Activated CD8-positive, alpha-beta T cell treated with anti-CD3 and anti-CD28 coated beads, Interleukin-2, amount 10 ng/mL, durations not matched to agents 7 days and 5 days (primary cell): ENCODE measurements at regions of chr9 and their contacts with region 1.

Region 1: DNA sequence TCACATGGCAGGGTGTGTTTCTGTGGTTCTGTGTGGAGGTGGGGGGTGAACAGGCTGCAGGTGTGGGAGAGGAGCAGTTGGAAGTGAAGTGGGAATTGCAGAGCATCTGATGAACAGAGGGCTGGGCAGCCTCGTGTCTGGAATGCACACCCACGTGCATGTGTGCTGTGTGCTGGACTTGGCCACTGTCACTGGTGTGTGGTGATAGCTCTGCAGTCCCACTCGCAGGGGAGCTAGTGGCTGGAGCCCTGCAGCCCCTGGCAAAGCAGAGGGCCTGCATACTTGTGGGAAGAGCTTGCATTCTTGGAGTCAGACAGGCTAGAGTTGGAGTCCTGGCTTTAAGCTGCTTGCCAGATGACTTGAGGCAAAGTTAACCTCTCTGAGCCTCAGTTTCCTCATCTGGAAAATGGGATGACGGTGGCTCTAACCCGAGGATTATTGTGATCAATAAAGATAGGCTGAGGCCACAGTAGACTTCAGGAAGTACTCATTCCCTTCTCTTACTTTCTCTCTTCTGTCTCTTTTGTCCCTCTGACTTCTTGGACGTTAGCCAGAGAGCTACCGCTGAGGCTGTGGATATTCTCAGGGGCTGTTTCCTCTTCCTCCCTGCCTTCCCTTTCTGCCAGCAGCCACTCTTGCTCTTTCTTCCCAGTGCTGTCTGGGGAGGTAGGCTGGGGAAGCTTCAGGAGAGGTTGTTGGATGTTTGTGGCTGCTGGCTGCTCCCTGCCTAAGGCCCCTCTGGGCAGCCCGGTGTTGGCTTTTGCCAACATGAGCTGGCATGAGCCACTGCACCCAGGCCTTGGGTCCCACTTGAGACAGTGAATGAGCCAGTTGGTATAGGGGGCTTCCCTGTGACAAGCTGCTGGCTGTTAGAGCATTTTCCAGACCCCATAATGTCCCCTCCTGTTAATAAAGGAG is 18.3 kb downstream of the PSAT1 start:
- DNase-seq: no peak
- ATAC-seq: no peak
- H3K4me3 Mint-ChIP-seq: no peak overlapping the region
- H3K27ac Mint-ChIP-seq: peak overlapping the region; percentile 72
- H3K4me1 Mint-ChIP-seq: no peaks in the 10 kb centered on the region
- H3K27me3 Mint-ChIP-seq: no peaks in the 10 kb centered on the region

Region 2: GRCh38 chr9:78167356-78167755 is 147.9 kb before region 1 on chr9:
- CTCF ChIA-PET with region 1: no interaction called
- POLR2A ChIA-PET with region 1: no interaction called
- DNase-seq: no peak
- ATAC-seq: no peak
- H3K4me3 Mint-ChIP-seq: no peak overlapping the region
- H3K27ac Mint-ChIP-seq: no peak overlapping the region
- H3K4me1 Mint-ChIP-seq: no peaks in the 10 kb centered on the region
- H3K27me3 Mint-ChIP-seq: peaks cover 2% of the 10 kb centered on the region

Region 3: DNA sequence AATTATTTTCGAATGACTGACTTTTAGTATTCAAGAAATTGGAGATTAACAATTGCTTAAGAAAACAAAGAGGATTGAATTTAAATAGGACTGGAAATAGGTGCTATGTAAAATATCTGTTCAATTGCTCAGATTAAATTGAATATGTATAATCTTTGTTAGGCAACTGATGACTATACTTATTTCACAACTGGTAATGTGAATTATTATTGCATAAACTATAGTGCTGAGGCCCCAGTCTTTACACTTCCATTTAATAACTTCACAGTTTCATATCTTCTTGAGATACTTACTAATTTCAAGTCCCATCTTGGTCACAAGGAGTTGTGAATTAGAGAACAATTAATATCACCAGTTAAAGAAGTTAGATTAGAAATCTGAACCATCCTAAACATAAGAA is 62.6 kb before region 1 on chr9:
- CTCF ChIA-PET with region 1: no interaction called
- POLR2A ChIA-PET with region 1: no interaction called
- DNase-seq: no peak
- ATAC-seq: no peak
- H3K4me3 Mint-ChIP-seq: no peak overlapping the region
- H3K27ac Mint-ChIP-seq: no peak overlapping the region
- H3K4me1 Mint-ChIP-seq: peaks cover 12% of the 10 kb centered on the region
- H3K27me3 Mint-ChIP-seq: no peaks in the 10 kb centered on the region

Region 4: DNA sequence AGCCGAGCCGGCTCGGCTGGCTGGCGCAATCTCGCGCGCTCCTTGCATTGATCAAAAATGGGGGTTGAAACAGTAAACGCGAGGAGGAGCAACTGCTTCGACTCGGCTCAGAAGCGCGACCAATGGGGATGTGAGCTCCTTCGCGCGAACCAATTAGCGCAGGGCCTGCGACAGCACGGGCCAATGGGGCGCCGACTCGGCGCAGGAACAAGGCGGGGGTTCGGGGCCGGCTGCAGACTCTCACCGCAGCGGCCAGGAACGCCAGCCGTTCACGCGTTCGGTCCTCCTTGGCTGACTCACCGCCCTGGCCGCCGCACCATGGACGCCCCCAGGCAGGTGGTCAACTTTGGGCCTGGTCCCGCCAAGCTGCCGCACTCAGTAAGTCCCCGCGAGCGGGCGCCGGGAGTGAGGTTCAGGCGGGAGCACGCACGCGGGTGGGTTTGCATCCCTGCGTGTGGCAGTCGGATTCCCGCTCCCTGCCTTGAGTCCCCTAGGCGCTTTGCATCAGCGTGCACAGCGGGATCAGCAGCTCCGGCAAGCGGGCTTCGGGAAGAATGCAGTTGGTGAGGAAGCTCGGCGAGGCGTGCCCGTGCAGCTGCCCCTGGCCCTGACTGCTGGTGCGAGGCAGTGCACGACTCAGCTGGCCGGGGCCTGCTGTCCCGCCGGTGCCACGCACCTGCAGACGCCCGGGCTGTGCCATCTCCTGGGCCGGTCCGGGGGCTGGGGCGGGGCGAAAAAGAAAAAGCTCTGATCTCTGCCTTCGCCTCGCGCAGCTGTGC is 18.1 kb before region 1 on chr9 and contains the start of gene PSAT1:
- CTCF ChIA-PET with region 1: no interaction called
- POLR2A ChIA-PET with region 1: interaction called, 11 read pairs
- DNase-seq: peak; percentile 95
- ATAC-seq: peak; percentile 98
- H3K4me3 Mint-ChIP-seq: peak within 1 kb of the TSS; percentile 85
- H3K27ac Mint-ChIP-seq: peak within 1 kb of the TSS; percentile 95
- H3K4me1 Mint-ChIP-seq: peaks cover 60% of the 10 kb centered on the region
- H3K27me3 Mint-ChIP-seq: no peaks in the 10 kb centered on the region
- total RNA-seq, gene PSAT1: 110 to 112 TPM